PC-9 (cell line): ENCODE measurements at regions of chr7 and their contacts with region 1.

Region 1: GRCh38 chr7:108030516-108030915 is 27.6 kb upstream of the LAMB1 start:
- DNase-seq: no peak
- H3K4me3 ChIP-seq: no peak overlapping the region
- H3K27ac ChIP-seq: no peak overlapping the region
- H3K4me1 ChIP-seq: peaks cover 17% of the 10 kb centered on the region
- H3K27me3 ChIP-seq: no peaks in the 10 kb centered on the region
- CTCF ChIP-seq: no peak

Region 2: GRCh38 chr7:106959753-106960152 is 1070.8 kb before region 1 on chr7:
- CTCF ChIA-PET with region 1: no interaction called
- POLR2A ChIA-PET with region 1: no interaction called
- intact Hi-C with region 1: no loop called
- DNase-seq: no peak
- H3K4me3 ChIP-seq: no peak overlapping the region
- H3K27ac ChIP-seq: no peak overlapping the region
- H3K4me1 ChIP-seq: no peaks in the 10 kb centered on the region
- H3K27me3 ChIP-seq: no peaks in the 10 kb centered on the region
- CTCF ChIP-seq: peak; percentile 41; the same call in 1 of the 2 replicates

Region 3: DNA sequence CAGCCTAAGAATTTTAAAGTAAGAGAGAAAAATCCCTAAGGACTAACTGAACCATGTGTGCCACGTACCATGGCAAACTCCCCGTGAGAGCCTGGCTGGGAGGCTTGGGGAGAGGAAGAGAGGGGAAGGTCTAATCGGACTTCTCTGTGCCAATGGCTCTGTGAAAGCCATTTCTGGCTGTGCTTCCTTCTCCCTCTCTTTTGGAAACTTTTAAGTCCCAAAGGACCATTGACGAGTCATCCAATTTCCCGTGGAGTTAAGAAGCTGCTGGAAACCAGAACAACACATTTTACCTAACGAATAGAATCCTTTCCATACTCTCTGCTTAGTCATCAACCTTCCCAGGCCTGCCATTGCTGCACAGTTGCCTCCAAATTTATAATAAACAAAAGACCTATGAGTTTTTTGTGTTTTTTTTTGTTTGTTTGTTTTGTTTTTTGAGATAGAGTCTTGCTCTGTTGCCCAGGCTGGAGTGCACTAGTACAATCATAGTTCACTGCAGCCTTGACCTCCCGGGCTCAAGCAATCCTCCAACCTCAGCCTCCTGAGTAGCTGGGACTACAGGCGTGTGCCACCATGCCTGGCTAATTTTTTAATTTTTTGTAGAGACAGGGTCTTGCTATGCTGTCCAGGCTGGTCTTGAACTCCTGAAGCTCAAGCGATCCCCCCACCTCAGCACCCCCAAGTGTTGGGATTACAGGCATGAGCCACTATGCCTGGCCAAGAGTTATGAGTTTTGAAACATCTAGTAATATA is 40.7 kb before region 1 on chr7:
- CTCF ChIA-PET with region 1: no interaction called
- POLR2A ChIA-PET with region 1: interaction called, 11 read pairs
- intact Hi-C with region 1: no loop called
- DNase-seq: no peak
- H3K4me3 ChIP-seq: no peak overlapping the region
- H3K27ac ChIP-seq: no peak overlapping the region
- H3K4me1 ChIP-seq: peaks cover 14% of the 10 kb centered on the region
- H3K27me3 ChIP-seq: no peaks in the 10 kb centered on the region
- CTCF ChIP-seq: no peak

Region 4: GRCh38 chr7:108045154-108045553 is 14.6 kb after region 1 on chr7:
- CTCF ChIA-PET with region 1: no interaction called
- POLR2A ChIA-PET with region 1: interaction called, 21 read pairs
- intact Hi-C with region 1: no loop called
- DNase-seq: no peak
- H3K4me3 ChIP-seq: no peak overlapping the region
- H3K27ac ChIP-seq: no peak overlapping the region
- H3K4me1 ChIP-seq: no peaks in the 10 kb centered on the region
- H3K27me3 ChIP-seq: no peaks in the 10 kb centered on the region
- CTCF ChIP-seq: no peak

Region 5: DNA sequence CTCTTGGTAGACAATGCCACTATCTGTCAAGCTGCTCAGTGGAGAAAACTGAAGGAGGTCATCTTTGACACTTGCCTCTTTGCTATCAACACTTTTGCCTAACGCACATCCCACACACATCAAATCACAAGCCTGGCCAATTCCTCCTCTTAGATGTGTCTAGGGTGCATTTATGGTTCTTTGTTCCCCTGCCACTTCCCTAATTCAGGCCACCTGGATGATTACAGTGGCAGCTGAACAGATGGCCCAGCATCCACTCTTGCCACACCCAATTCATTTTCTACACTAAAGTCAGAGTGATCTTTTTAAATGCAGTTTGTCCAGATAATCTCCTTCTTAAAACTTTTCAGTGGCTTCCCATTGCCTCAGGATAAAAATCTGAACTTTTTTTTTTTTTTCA is 41.0 kb after region 1 on chr7:
- CTCF ChIA-PET with region 1: no interaction called
- POLR2A ChIA-PET with region 1: interaction called, 3 read pairs
- intact Hi-C with region 1: loop called (anchors 1 kb)
- DNase-seq: no peak
- H3K4me3 ChIP-seq: no peak overlapping the region
- H3K27ac ChIP-seq: no peak overlapping the region
- H3K4me1 ChIP-seq: peaks cover 6% of the 10 kb centered on the region; the same call in 1 of the 2 replicates
- H3K27me3 ChIP-seq: no peaks in the 10 kb centered on the region
- CTCF ChIP-seq: no peak